ENCODE measurements at regions of chr12 and their contacts with region 1.

Region 1: GRCh38 chr12:103571286-103571685 is 15.8 kb upstream of the STAB2 start:
- DNase-seq: peak; percentile 21

Region 2: GRCh38 chr12:103350116-103350515 is 221.2 kb before region 1 on chr12:
- CTCF ChIA-PET with region 1: no interaction called
- POLR2A ChIA-PET with region 1: no interaction called
- DNase-seq: no peak

Region 3: GRCh38 chr12:103560604-103561573 is 10.4 kb before region 1 on chr12:
- CTCF ChIA-PET with region 1: no interaction called
- POLR2A ChIA-PET with region 1: no interaction called
- DNase-seq: no peak

Region 4: DNA sequence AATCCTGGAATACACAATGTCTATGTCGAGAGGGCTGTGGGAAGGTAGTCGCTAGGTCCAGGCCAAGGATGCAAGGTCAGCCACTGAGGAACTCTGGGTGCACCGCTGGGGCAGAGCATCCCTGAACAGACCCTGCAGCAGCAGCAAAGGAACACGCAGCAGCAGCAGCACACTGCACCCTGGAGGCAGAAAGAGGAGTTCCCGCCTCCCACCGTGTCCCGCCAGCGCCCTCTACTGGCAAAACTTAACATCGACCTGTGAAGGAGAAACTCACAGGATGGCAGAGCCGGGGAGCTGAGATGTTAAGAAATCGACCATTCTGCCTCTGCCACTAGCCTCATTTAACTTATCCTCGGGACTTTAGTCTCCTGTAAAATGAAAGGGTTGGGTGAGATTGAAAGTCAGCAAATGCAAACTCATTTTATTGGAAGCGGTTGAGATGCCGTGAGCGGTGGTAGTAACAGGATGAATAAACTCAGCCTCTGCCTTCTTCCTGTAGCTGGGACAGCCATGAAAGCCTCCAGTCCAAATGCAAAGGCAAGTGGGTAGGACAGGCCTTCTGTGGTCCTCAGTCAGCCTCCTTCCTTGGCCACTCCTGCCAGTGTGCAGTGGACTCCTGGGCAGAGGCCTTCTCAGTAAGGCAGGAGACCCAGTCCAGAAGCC is 61.4 kb after region 1 on chr12:
- CTCF ChIA-PET with region 1: interaction called, 12 read pairs
- POLR2A ChIA-PET with region 1: no interaction called
- DNase-seq: peak; percentile 89